ENCODE measurements at regions of chr5 and their contacts with region 1.

Region 1: DNA sequence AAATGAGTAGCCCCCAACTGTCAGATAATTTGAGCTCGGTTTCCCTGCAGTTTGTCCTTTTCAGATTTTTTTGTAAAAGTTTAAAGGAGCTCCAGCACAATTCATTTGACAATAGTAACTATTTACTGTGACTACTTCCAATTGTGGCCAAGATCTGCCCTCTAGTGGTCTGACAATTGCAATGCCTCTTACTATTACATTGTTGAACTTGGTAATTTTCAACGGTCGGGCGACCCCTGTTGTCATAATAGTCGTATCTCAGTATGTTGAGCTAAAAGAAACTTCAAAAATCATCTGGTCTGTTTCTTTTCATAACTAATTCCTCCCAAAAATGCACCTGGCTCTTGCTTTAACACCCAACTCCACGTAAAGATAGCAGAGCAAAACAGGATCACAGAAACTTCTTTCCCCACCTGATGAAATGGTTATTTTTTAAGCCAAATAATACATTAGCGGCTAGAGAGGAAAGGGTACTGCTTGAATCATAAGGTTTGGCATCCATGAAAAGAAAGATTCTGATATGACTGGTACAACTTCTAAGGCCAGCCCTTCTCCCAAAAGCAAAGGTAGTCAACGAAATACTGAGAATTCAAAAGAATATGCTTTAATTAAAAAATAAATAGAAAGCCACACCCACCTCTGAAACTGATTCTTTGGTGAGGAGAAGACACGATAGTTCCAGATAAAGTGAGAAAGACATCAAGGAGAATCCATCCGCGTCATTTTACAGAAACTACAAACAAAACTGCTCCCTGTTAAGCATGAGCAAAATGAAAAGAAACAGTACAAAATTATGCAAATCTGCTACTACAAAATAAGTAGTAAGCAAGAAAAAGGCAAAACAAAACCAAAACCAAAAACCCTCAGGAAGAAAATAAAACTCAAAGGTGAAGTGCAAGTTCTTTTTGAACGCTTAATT is 76.9 kb upstream of the HTR4 start:
- DNase-seq: peak; percentile 98
- ATAC-seq: peak; percentile 78
- H3K4me3 ChIP-seq: peak overlapping the region; percentile 65
- H3K27ac ChIP-seq: no peak overlapping the region
- H3K4me1 ChIP-seq: peaks cover 54% of the 10 kb centered on the region
- H3K27me3 ChIP-seq: no peaks in the 10 kb centered on the region
- CTCF ChIP-seq: peak; percentile 100

Region 2: GRCh38 chr5:148179234-148179824 is 551.9 kb before region 1 on chr5:
- CTCF ChIA-PET with region 1: interaction called, 11 read pairs
- POLR2A ChIA-PET with region 1: no interaction called
- intact Hi-C with region 1: loop called (anchors 1 kb)
- DNase-seq: peak; percentile 85
- ATAC-seq: peak; percentile 72; the same call in 1 of the 2 replicates
- H3K4me3 ChIP-seq: no peak overlapping the region
- H3K27ac ChIP-seq: no peak overlapping the region
- H3K4me1 ChIP-seq: no peaks in the 10 kb centered on the region
- H3K27me3 ChIP-seq: no peaks in the 10 kb centered on the region
- CTCF ChIP-seq: peak; percentile 96

Region 3: GRCh38 chr5:148297731-148298130 is 433.5 kb before region 1 on chr5:
- CTCF ChIA-PET with region 1: no interaction called
- POLR2A ChIA-PET with region 1: no interaction called
- intact Hi-C with region 1: no loop called
- DNase-seq: peak; percentile 22
- ATAC-seq: no peak
- H3K4me3 ChIP-seq: no peak overlapping the region
- H3K27ac ChIP-seq: no peak overlapping the region
- H3K4me1 ChIP-seq: no peaks in the 10 kb centered on the region
- H3K27me3 ChIP-seq: no peaks in the 10 kb centered on the region
- CTCF ChIP-seq: 0 out of 2 replicates have a peak, but pooled peaks have one; percentile 26

Region 4: DNA sequence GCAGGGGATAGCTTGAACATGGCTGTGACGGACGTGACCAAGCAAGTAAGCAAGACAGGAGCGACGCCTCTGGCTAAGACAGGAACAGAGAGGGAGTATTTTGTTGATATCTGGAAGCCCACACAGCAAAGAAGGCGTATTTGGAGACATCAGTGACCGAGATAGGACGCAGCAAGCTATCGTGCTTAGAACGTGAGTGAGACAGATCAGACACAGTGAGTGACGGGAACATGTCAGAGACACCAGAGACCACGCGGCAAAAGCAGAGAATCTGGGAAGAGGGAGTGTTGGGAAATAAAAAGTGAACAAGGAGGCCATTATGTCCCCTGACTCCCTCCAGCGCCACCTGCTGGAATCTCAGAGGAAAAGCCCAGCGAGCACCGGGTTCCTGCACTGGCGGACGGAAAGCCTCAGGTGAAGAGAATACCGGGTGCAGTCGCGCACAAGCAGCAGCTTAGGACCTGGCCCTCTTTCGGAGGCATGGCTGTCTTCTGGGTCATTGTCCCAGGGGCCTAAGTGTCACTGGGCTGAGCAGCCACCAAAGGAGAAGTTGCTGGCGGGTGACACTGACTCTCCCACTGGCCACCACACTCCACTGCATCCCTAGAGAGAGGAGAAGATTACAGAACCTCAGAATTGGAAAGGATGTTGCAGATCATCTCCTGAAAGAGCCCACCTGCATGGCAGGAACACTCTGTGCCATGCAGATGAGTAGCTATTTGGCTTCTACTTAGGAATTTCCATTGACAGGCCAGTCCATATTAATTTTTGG is 248.3 kb before region 1 on chr5:
- CTCF ChIA-PET with region 1: no interaction called
- POLR2A ChIA-PET with region 1: no interaction called
- intact Hi-C with region 1: loop called (anchors 1 kb)
- DNase-seq: peak; percentile 87
- ATAC-seq: peak; percentile 90
- H3K4me3 ChIP-seq: no peak overlapping the region
- H3K27ac ChIP-seq: no peak overlapping the region
- H3K4me1 ChIP-seq: no peaks in the 10 kb centered on the region
- H3K27me3 ChIP-seq: peaks cover 55% of the 10 kb centered on the region
- CTCF ChIP-seq: peak; percentile 98

Region 5: GRCh38 chr5:148697180-148697808 is 33.9 kb before region 1 on chr5:
- CTCF ChIA-PET with region 1: interaction called, 20 read pairs
- POLR2A ChIA-PET with region 1: no interaction called
- intact Hi-C with region 1: no loop called
- DNase-seq: peak; percentile 87
- ATAC-seq: peak; percentile 99
- H3K4me3 ChIP-seq: no peak overlapping the region
- H3K27ac ChIP-seq: no peak overlapping the region
- H3K4me1 ChIP-seq: 0 out of 2 replicates have a peak, but pooled peaks cover 4% of the 10 kb centered on the region
- H3K27me3 ChIP-seq: peaks cover 11% of the 10 kb centered on the region; the same call in 1 of the 2 replicates
- CTCF ChIP-seq: no peak

Region 6: GRCh38 chr5:148963664-148964063 is 232.5 kb after region 1 on chr5:
- CTCF ChIA-PET with region 1: interaction called, 4 read pairs
- POLR2A ChIA-PET with region 1: no interaction called
- intact Hi-C with region 1: loop called (anchors 1 kb)
- DNase-seq: no peak
- ATAC-seq: no peak
- H3K4me3 ChIP-seq: no peak overlapping the region
- H3K27ac ChIP-seq: peak overlapping the region; percentile 79; the same call in 1 of the 2 replicates
- H3K4me1 ChIP-seq: peaks cover 81% of the 10 kb centered on the region
- H3K27me3 ChIP-seq: no peaks in the 10 kb centered on the region
- CTCF ChIP-seq: no peak

Region 7: GRCh38 chr5:149053072-149053695 is 322.0 kb after region 1 on chr5:
- CTCF ChIA-PET with region 1: interaction called, 9 read pairs
- POLR2A ChIA-PET with region 1: no interaction called
- intact Hi-C with region 1: loop called (anchors 1 kb)
- DNase-seq: peak; percentile 99
- ATAC-seq: peak; percentile 93
- H3K4me3 ChIP-seq: peak overlapping the region; percentile 3; the same call in 1 of the 2 replicates
- H3K27ac ChIP-seq: peak overlapping the region; percentile 65
- H3K4me1 ChIP-seq: peaks cover 54% of the 10 kb centered on the region
- H3K27me3 ChIP-seq: no peaks in the 10 kb centered on the region
- CTCF ChIP-seq: peak; percentile 25; the same call in 1 of the 2 replicates

Region 8: GRCh38 chr5:149228618-149229297 is 497.6 kb after region 1 on chr5:
- CTCF ChIA-PET with region 1: interaction called, 7 read pairs
- POLR2A ChIA-PET with region 1: no interaction called
- intact Hi-C with region 1: loop called (anchors 2 kb)
- DNase-seq: peak; percentile 98
- ATAC-seq: peak; percentile 91
- H3K4me3 ChIP-seq: no peak overlapping the region
- H3K27ac ChIP-seq: peak overlapping the region; percentile 17
- H3K4me1 ChIP-seq: peaks cover 34% of the 10 kb centered on the region
- H3K27me3 ChIP-seq: no peaks in the 10 kb centered on the region
- CTCF ChIP-seq: peak; percentile 100

Measured in PC-3 (cell line).